CD8-positive, alpha-beta memory T cell (primary cell): ENCODE measurements at regions of chr1 and their contacts with region 1.

Region 1: DNA sequence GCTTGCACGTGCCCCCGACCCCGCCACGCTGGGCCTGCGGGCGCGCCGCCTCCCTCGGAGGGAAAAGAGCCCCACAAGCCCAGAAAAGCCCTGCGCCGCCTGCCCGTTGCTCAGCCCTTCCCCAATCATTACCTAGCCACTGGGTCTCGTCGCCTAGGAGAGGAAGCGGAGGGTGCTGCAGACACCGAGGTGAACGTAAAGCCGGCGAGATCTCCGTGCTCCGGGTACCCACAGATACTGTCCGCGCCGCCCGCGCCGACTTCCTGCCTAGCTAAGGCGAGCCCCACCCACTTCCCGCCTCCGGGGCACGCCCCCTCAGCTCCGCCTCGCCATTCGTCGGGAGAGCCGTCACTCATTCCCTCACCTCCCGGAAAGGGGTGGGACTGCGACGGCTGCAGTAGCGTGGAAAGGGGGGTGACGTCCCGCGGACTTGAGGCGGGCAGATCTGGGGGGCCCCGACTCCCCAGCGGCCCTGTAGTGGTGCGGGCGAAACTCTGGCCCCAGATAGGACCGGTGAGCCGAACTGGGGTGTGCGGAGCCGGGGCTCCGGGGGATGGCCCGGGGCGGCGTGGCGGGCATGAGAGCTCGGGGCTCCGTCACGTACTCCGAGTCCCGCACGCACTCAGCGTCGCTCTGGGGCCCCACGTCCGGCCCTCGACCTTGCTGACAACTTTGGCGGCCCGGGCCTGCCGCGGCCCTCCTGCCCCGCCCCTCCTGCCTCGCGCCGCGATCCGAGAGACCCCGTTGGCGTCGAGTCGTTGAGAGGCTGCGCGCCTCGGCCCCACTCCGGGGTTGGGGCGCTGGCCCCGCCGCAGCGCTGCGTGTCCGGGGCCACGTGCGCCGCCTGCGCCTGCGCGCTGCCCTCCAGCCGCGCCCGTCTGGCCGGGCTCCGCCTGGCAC is at the start of gene ENO1:
- DNase-seq: peak; percentile 97 to 100 (median 99)
- H3K4me3 ChIP-seq: peak within 1 kb of the TSS; percentile 76
- H3K4me3 Mint-ChIP-seq: peak within 1 kb of the TSS; percentile 92 to 97 (median 94)
- H3K27ac ChIP-seq: peak within 1 kb of the TSS; percentile 89
- H3K27ac Mint-ChIP-seq: peak within 1 kb of the TSS; percentile 91 to 99 (median 98)
- H3K4me1 ChIP-seq: peaks cover 44% of the 10 kb centered on the region
- H3K4me1 Mint-ChIP-seq: peaks cover 40 to 54% (median 40%) of the 10 kb centered on the region in 3 donors
- H3K27me3 ChIP-seq: no peaks in the 10 kb centered on the region
- H3K27me3 Mint-ChIP-seq: peaks cover 0 to 2% of the 10 kb centered on the region in 2 donors
- total RNA-seq, gene ENO1: 3,105 to 3,136 TPM

Region 2: DNA sequence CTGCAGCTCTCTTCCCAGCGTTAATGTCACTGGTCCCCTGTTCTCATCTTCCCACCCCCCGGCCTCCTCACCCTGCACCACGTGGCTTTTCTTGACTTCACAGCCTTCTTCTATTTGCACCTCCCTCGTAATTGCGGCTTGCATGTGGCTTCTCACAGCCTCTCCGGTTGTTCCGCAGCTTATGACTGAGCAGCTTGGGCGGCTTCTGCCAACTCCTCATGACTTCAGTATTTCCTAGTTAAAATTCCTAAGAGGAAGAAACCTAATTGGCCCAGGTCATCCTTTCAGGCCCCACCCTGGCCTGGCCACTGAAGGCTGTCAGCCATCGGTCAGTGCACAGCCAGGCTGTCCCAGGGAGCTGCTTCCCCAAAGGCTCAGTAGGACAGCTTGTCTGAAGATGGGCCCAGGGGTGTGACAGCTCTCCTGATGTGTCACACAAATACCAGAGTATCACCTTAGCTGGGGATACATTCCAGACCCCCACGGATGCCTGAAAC is 52.7 kb before region 1 on chr1:
- CTCF ChIA-PET with region 1: no interaction called
- POLR2A ChIA-PET with region 1: no interaction called
- DNase-seq: peak in 2 of 5 donors; percentile 9 to 53
- H3K4me3 ChIP-seq: no peak overlapping the region
- H3K4me3 Mint-ChIP-seq: no peak overlapping the region
- H3K27ac ChIP-seq: no peak overlapping the region
- H3K27ac Mint-ChIP-seq: peak overlapping the region in 1 of 8 donors; percentile 47
- H3K4me1 ChIP-seq: peaks cover 6% of the 10 kb centered on the region
- H3K4me1 Mint-ChIP-seq: peaks cover 10 to 21% (median 11%) of the 10 kb centered on the region in 3 donors
- H3K27me3 ChIP-seq: no peaks in the 10 kb centered on the region
- H3K27me3 Mint-ChIP-seq: peaks cover 0 to 18% of the 10 kb centered on the region in 2 donors

Region 3: GRCh38 chr1:8858888-8859706 is 19.6 kb before region 1 on chr1:
- CTCF ChIA-PET with region 1: interaction called, 80 read pairs
- POLR2A ChIA-PET with region 1: interaction called, 10 read pairs
- DNase-seq: peak in 4 of 5 donors; percentile 20 to 62 (median 48)
- H3K4me3 ChIP-seq: no peak overlapping the region
- H3K4me3 Mint-ChIP-seq: peak overlapping the region in 1 of 7 donors; percentile 18
- H3K27ac ChIP-seq: no peak overlapping the region
- H3K27ac Mint-ChIP-seq: peak overlapping the region in 7 of 8 donors; percentile 13 to 94 (median 77)
- H3K4me1 ChIP-seq: no peaks in the 10 kb centered on the region
- H3K4me1 Mint-ChIP-seq: peaks cover 10 to 25% (median 17%) of the 10 kb centered on the region in 3 donors
- H3K27me3 ChIP-seq: no peaks in the 10 kb centered on the region
- H3K27me3 Mint-ChIP-seq: peaks cover 0 to 2% of the 10 kb centered on the region in 2 donors

Region 4: DNA sequence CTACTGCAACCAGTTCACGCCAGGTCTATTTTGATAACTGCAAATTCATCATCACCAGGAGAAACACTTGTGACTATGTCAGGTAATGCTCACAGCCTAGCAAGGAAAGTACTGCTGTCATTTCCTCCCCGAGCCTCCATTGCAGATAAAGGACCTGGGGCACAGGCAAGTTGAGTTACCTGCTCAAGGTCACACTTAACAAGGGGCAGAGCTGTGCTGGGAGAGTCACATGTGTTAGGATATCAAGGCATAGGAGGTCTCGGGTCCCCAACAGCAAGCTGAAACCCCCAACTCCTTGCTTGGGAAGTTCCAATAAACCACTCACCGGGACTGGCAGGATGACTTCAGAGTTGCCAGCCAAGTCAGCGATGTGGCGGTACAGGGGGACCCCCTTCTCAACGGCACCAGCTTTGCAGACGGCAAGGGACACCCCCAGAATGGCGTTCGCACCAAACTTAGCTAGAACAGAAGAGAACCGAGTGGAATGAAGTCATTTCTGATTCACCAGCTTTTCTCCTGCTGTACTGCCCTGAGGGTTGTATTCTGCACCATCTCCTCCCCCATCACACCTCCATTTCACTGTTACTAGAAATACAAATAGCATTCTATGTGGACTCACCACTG is 11.8 kb before region 1 on chr1:
- CTCF ChIA-PET with region 1: interaction called, 80 read pairs
- POLR2A ChIA-PET with region 1: interaction called, 10 read pairs
- DNase-seq: no peak
- H3K4me3 ChIP-seq: no peak overlapping the region
- H3K4me3 Mint-ChIP-seq: no peak overlapping the region
- H3K27ac ChIP-seq: no peak overlapping the region
- H3K27ac Mint-ChIP-seq: peak overlapping the region in 4 of 8 donors; percentile 23 to 65 (median 58)
- H3K4me1 ChIP-seq: peaks cover 10% of the 10 kb centered on the region
- H3K4me1 Mint-ChIP-seq: peaks cover 11 to 29% (median 27%) of the 10 kb centered on the region in 3 donors
- H3K27me3 ChIP-seq: no peaks in the 10 kb centered on the region
- H3K27me3 Mint-ChIP-seq: no peaks in the 10 kb centered on the region